Heart right ventricle (tissue), 16 donors: ENCODE measurements at regions of chr3 and their contacts with region 1.

Region 1: GRCh38 chr3:132709761-132710160 is 12.4 kb downstream of the NPHP3 start:
- DNase-seq: no peak
- ATAC-seq: no peak
- H3K4me3 ChIP-seq: no peak overlapping the region
- H3K27ac ChIP-seq: no peak overlapping the region
- H3K4me1 ChIP-seq: peaks cover 0 to 12% (median 3%) of the 10 kb centered on the region in 9 donors
- H3K27me3 ChIP-seq: no peaks in the 10 kb centered on the region
- CTCF ChIP-seq: no peak

Region 2: DNA sequence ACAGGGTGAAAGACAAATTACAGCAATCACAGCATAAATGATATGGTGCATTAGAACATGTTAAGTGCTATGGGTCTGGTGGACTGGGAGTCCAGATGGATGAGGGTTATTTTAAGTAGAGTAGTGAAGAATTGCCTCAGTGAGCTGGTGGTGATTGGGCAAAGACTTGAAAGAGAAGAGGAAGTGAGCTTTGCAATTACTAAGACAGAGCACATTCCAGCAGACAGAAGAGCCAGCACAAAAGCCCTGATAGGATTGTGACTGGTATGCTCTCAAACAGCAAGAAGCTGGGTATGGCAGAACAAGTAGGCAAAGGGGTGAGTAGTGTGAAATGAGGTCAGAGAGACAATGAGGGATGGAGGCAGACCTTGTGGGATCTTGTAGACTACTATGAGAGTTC is 114.7 kb before region 1 on chr3:
- intact Hi-C with region 1: no loop called
- DNase-seq: no peak
- ATAC-seq: peak in 1 of 8 donors; percentile 22
- H3K4me3 ChIP-seq: no peak overlapping the region
- H3K27ac ChIP-seq: no peak overlapping the region
- H3K4me1 ChIP-seq: peaks cover 0 to 14% (median 0%) of the 10 kb centered on the region in 9 donors
- H3K27me3 ChIP-seq: no peaks in the 10 kb centered on the region
- CTCF ChIP-seq: no peak

Region 3: DNA sequence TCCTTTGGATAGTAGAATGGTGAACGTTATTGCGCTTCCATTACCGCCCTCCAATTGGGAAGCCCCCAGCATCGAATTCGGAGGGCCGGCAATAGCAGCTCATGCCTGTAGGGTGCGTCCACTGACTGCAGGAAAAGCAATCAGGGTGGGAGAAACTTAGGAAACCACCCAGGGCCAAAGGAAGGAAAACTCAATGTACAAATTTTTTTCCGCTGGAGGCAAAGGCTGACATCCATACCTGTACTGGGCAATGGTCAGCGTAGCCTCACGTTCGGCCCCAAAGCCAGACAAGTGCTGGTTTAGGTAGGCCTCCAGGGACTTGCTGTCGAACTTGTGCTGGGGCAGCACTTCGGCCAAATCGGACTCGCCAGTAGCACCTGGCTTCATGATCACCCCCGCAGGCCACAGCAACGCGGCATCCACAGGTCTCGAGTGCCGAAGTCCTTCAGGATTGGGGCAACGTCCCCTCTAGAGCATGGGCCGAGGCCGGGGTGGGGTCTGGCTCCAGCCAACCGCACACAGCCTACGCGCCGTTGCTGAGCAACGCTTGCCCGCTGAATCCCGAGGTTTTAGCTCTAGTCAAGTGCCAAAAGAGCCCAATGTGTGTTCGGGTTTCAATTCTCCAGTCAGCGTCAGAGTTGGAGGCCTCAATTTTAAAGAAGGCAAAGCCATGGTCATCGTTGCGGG is 50.3 kb before region 1 on chr3 and contains the start of gene ACAD11:
- intact Hi-C with region 1: loop called in 1 of 10 experiments (anchors 10 kb)
- DNase-seq: peak; percentile 66 to 70
- ATAC-seq: peak; percentile 80 to 91 (median 86)
- H3K4me3 ChIP-seq: peak within 1 kb of the TSS; percentile 81 to 94 (median 90)
- H3K27ac ChIP-seq: peak within 1 kb of the TSS; percentile 80 to 97 (median 94)
- H3K4me1 ChIP-seq: peaks cover 2 to 85% (median 64%) of the 10 kb centered on the region in 9 donors
- H3K27me3 ChIP-seq: no peaks in the 10 kb centered on the region
- CTCF ChIP-seq: peak; percentile 31 to 78 (median 59)
- total RNA-seq, gene ACAD11: 11.8 to 31.2 (median 22.2) TPM

Region 4: GRCh38 chr3:132675408-132675807 is 34.4 kb before region 1 on chr3:
- intact Hi-C with region 1: loop called in 1 of 10 experiments (anchors 5 kb)
- DNase-seq: no peak
- ATAC-seq: no peak
- H3K4me3 ChIP-seq: no peak overlapping the region
- H3K27ac ChIP-seq: no peak overlapping the region
- H3K4me1 ChIP-seq: no peaks in the 10 kb centered on the region
- H3K27me3 ChIP-seq: no peaks in the 10 kb centered on the region
- CTCF ChIP-seq: no peak